Activated naive CD4-positive, alpha-beta T cell treated with anti-CD3 and anti-CD28 coated beads for 36 hours (primary cell): ENCODE measurements at regions of chr13 and their contacts with region 1.

Region 1: GRCh38 chr13:100674848-100675660 is 459 bp upstream of the TMTC4 start:
- DNase-seq: peak; percentile 99
- H3K4me3 Mint-ChIP-seq: peak overlapping the region; percentile 76
- H3K27ac Mint-ChIP-seq: peak overlapping the region; percentile 20
- H3K4me1 Mint-ChIP-seq: peaks cover 20% of the 10 kb centered on the region
- H3K27me3 Mint-ChIP-seq: no peaks in the 10 kb centered on the region

Region 2: GRCh38 chr13:99606324-99607066 is 1068.6 kb before region 1 on chr13:
- CTCF ChIA-PET with region 1: no interaction called
- intact Hi-C with region 1: loop called (anchors 1 kb)
- DNase-seq: peak; percentile 92
- H3K4me3 Mint-ChIP-seq: peak within 1 kb of the TSS; percentile 82
- H3K27ac Mint-ChIP-seq: peak within 1 kb of the TSS; percentile 75
- H3K4me1 Mint-ChIP-seq: peaks cover 23% of the 10 kb centered on the region
- H3K27me3 Mint-ChIP-seq: no peaks in the 10 kb centered on the region

Region 3: GRCh38 chr13:100088644-100089464 is 586.2 kb before region 1 on chr13 and contains the start of gene PCCA:
- CTCF ChIA-PET with region 1: no interaction called
- intact Hi-C with region 1: loop called (anchors 2 kb)
- DNase-seq: peak; percentile 86
- H3K4me3 Mint-ChIP-seq: peak within 1 kb of the TSS; percentile 93
- H3K27ac Mint-ChIP-seq: peak within 1 kb of the TSS; percentile 37
- H3K4me1 Mint-ChIP-seq: peaks cover 19% of the 10 kb centered on the region
- H3K27me3 Mint-ChIP-seq: no peaks in the 10 kb centered on the region
- total RNA-seq, gene PCCA: 6.8 to 8.1 TPM

Region 4: GRCh38 chr13:100581504-100581903 is 93.5 kb before region 1 on chr13:
- CTCF ChIA-PET with region 1: no interaction called
- intact Hi-C with region 1: loop called (anchors 2 kb)
- DNase-seq: peak; percentile 24
- H3K4me3 Mint-ChIP-seq: no peak overlapping the region
- H3K27ac Mint-ChIP-seq: no peak overlapping the region
- H3K4me1 Mint-ChIP-seq: peaks cover 36% of the 10 kb centered on the region
- H3K27me3 Mint-ChIP-seq: no peaks in the 10 kb centered on the region

Region 5: DNA sequence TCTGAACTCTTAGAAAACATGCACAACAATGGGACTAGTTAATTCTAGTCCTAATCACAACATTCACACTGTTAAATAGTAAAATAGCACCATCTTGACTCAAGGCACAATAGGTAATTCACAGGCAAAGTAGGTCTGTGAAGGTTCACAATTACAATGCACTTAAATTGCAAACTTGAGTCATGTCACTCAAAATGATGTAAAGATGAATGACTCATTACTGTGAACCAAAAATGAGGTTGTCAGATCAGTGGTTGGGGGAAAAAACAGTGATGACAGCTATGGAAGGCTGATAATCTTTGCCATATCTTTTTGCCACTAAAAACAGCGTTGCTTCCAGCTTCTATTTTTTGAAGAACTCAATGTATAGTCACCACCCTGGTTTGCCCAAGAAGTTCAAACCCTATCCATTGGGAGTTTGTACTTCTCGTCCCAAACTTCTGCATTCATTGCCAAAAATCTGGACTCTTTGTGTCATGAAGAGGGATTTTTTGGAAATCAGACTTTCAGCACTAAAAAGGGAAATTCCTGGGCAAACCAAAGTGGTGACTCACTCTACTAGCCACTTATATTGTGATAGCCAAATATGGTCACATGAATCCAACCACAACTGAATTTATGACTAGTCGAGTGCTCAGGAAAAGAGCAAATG is 200.5 kb after region 1 on chr13:
- CTCF ChIA-PET with region 1: no interaction called
- intact Hi-C with region 1: loop called (anchors 1 kb)
- DNase-seq: peak; percentile 31
- H3K4me3 Mint-ChIP-seq: no peak overlapping the region
- H3K27ac Mint-ChIP-seq: peak overlapping the region; percentile 64
- H3K4me1 Mint-ChIP-seq: peaks cover 8% of the 10 kb centered on the region
- H3K27me3 Mint-ChIP-seq: peaks cover 57% of the 10 kb centered on the region

Region 6: GRCh38 chr13:101317986-101318523 is 643.0 kb after region 1 on chr13:
- CTCF ChIA-PET with region 1: no interaction called
- intact Hi-C with region 1: no loop called
- DNase-seq: no peak
- H3K4me3 Mint-ChIP-seq: no peak overlapping the region
- H3K27ac Mint-ChIP-seq: no peak overlapping the region
- H3K4me1 Mint-ChIP-seq: no peaks in the 10 kb centered on the region
- H3K27me3 Mint-ChIP-seq: peaks cover 5% of the 10 kb centered on the region

Region 7: GRCh38 chr13:102394158-102395053 is 1719.4 kb after region 1 on chr13:
- CTCF ChIA-PET with region 1: no interaction called
- intact Hi-C with region 1: loop called (anchors 10 kb)
- DNase-seq: peak; percentile 97
- H3K4me3 Mint-ChIP-seq: peak overlapping the region; percentile 79
- H3K27ac Mint-ChIP-seq: peak overlapping the region; percentile 69
- H3K4me1 Mint-ChIP-seq: peaks cover 17% of the 10 kb centered on the region
- H3K27me3 Mint-ChIP-seq: peaks cover 16% of the 10 kb centered on the region